Activated T-helper 1 cell treated with anti-CD3 and anti-CD28 coated beads, Interleukin-12 subunit alpha, Interleukin-12 subunit beta, Interleukin-2, Interleukin-4 antibody, amounts not matched to agents 30 ng/mL and 10 ng/mL and 1 ng/mL, durations not matched to agents 14 hours and 24 hours and 36 hours (primary cell): ENCODE measurements at regions of chr2 and their contacts with region 1.

Region 1: GRCh38 chr2:100580367-100581276 is 17.8 kb downstream of the PDCL3 start:
- DNase-seq: peak; percentile 37
- H3K4me3 Mint-ChIP-seq: peak overlapping the region; percentile 63
- H3K27ac Mint-ChIP-seq: peak overlapping the region; percentile 85
- H3K4me1 Mint-ChIP-seq: peaks cover 42% of the 10 kb centered on the region
- H3K27me3 Mint-ChIP-seq: peaks cover 2% of the 10 kb centered on the region

Region 2: GRCh38 chr2:100291120-100291970 is 289.3 kb before region 1 on chr2:
- intact Hi-C with region 1: loop called (anchors 5 kb)
- DNase-seq: peak; percentile 61
- H3K4me3 Mint-ChIP-seq: no peak overlapping the region
- H3K27ac Mint-ChIP-seq: no peak overlapping the region
- H3K4me1 Mint-ChIP-seq: peaks cover 6% of the 10 kb centered on the region
- H3K27me3 Mint-ChIP-seq: peaks cover 13% of the 10 kb centered on the region